Aorta (tissue), 5 donors: ENCODE measurements at regions of chr6 and their contacts with region 1.

Region 1: DNA sequence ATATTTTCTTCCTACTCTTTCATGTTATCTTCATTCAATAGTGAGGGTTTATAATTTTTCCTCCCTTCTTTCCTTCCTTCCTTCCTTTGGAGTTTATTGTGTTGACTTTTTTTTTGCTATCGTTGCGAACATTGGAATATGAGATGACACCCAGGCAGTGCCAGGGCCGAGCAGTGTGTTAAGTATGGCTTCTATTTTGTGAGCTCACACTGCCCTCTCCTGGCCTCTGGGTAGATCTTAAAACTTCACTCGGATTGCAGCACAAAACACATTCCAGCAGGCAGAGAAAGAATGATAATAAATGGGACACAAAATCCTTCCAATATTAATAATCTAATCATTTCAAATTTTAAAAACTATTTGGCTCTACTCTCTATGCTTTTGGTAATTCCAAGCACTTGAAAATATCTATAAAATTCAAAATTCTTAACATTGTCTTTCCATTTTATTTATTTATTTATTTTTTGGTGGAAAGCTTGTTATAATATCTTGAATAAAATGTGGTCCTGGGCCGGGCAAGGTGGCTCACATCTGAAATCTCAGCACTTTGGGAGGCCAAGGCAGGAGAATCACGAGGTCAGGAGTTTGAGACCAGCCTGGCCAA is 147.4 kb upstream of the OLIG3 start:
- DNase-seq: peak in 1 of 2 donors; percentile 71
- ATAC-seq: peak; percentile 84
- H3K4me3 ChIP-seq: no peak overlapping the region
- H3K27ac ChIP-seq: no peak overlapping the region
- H3K4me1 ChIP-seq: peaks cover 0 to 2% of the 10 kb centered on the region in 2 donors
- H3K27me3 ChIP-seq: no peaks in the 10 kb centered on the region

Region 2: DNA sequence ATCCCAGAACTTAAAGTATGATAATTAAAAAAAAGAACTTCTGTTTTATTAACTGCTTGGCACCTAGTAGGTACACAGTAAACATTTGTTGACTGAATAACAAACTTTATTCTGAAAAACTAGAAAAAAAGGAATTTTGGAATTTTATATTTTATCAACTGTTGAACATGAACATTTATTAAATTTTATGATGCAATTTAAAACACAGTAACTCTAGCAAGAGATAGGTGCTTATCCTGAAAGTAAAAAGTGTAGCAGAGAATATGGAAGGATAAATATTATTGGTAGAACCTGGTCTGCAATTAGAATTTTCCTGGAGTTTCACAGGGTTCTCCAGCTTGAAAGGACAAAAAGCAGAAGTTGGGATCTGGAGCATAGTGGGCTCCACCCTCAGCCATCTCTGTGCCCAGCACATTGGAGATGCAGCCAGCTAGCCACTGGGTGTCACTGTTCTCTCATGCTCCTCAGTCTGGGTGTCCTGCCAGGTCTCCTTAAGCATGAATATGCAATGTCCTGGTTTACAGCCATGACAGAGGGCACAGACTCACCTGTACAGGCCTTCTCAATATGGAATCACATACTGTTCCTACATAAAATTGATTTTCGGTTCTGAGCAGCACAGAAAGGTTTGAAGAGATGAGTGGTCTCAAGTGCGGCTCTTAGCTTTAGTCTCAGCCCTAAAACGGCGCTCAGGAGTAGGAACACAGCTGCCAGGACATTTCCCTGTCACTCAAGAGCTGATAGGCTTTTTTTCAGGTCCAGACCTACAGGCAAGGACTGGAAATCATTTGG is 565.1 kb before region 1 on chr6:
- intact Hi-C with region 1: loop called in 1 of 2 experiments (anchors 5 kb)
- DNase-seq: peak in 1 of 2 donors; percentile 75
- ATAC-seq: peak; percentile 89
- H3K4me3 ChIP-seq: no peak overlapping the region
- H3K27ac ChIP-seq: no peak overlapping the region
- H3K4me1 ChIP-seq: no peaks in the 10 kb centered on the region
- H3K27me3 ChIP-seq: peaks cover 0 to 2% of the 10 kb centered on the region in 2 donors

Region 3: GRCh38 chr6:137094411-137095008 is 547.1 kb before region 1 on chr6:
- intact Hi-C with region 1: loop called (anchors 5 to 10 kb)
- DNase-seq: peak in 1 of 2 donors; percentile 53
- ATAC-seq: peak; percentile 72
- H3K4me3 ChIP-seq: no peak overlapping the region
- H3K27ac ChIP-seq: no peak overlapping the region
- H3K4me1 ChIP-seq: no peaks in the 10 kb centered on the region
- H3K27me3 ChIP-seq: no peaks in the 10 kb centered on the region

Region 4: DNA sequence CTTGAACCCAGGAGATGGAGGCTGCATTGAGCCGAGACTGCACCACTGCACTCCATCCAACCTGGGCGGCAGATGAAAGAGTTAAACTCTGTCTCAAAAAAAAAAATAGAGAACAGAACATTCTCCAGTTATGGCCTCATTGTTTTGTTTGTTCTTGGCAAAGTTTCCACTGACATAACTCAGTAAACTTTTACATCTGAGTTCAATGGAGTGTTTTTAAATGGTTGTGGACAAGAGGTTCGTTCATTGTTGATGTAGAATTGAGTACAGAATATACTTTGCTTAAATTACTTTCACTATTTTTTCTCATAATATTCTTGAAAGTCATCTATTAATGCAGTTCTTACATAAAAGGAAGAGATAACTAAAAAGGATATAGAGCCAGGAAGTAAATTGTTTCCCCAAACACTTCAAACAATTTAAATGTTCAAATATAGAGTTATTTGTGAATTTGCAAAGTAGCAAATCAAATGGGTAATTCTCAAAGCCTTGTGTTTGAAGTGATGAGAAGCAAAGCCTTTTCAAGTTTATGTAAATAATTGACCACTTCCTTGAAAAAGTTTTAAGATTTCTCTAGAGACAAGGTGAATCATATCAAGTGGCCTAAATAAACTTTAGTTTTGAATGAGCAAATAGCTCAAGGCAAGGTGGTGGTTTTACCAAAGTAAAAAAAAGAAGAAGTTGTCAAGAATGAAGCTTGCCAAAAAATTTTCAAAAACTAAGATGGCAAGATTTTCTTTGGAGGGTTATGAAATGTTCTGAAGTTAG is 380.0 kb before region 1 on chr6:
- intact Hi-C with region 1: loop called in 1 of 2 experiments (anchors 10 kb)
- DNase-seq: no peak
- ATAC-seq: no peak
- H3K4me3 ChIP-seq: no peak overlapping the region
- H3K27ac ChIP-seq: no peak overlapping the region
- H3K4me1 ChIP-seq: peaks cover 0 to 2% of the 10 kb centered on the region in 2 donors
- H3K27me3 ChIP-seq: no peaks in the 10 kb centered on the region

Region 5: DNA sequence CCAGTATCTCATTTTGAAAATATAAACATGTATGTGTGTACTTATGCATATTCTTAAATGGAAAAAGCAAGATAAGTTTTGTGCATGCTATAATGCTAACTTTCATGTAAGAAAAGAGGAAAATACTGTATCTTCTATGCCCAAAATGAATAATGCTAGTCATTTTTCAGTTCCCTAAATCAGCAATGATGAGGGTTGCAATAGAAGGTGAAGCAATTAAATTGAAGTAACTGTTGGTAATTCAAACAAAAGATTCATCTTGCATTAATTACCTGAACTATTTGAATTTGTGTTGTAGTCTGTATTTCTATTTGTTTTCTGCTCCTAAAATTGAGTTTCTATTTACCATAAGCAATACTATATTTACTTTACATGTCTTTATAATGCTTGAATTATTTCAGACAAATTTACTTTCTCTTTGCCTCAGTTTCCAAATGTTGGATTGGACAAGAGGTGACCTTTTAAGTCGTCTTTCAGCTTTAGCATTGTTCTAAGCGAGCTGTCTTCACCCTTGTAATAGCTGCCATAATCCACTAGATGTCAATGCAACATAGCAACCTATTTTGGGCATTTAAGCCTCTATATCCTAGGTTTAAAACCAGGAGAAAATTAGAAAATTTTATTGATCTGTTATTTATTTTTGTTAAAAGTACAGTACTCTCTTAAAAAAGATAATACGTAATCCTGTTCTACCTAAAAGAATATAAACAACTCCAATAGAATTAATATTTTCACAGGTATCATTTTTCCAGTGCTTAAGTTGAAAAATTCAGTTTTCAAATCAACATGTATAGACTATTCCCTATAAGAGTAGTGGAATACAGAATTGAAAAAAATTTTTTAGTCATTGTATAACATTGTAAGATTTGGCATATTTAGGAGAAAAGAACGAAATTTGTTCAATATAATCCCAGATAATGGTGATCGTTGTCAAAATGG is 370.1 kb before region 1 on chr6:
- intact Hi-C with region 1: loop called (anchors 10 kb)
- DNase-seq: no peak
- ATAC-seq: peak; percentile 82
- H3K4me3 ChIP-seq: no peak overlapping the region
- H3K27ac ChIP-seq: no peak overlapping the region
- H3K4me1 ChIP-seq: no peaks in the 10 kb centered on the region
- H3K27me3 ChIP-seq: no peaks in the 10 kb centered on the region